Activated CD4-positive, alpha-beta T cell treated with anti-CD3 and anti-CD28 coated beads for 36 hours (primary cell): ENCODE measurements at regions of chr7 and their contacts with region 1.

Region 1: GRCh38 chr7:107563775-107564552 is at the starts of genes COG5 and DUS4L:
- DNase-seq: peak; percentile 92
- ATAC-seq: peak; percentile 88
- H3K4me3 Mint-ChIP-seq: peak within 1 kb of the TSS; percentile 85
- H3K27ac Mint-ChIP-seq: peak within 1 kb of the TSS; percentile 94
- H3K4me1 Mint-ChIP-seq: peaks cover 62% of the 10 kb centered on the region
- H3K27me3 Mint-ChIP-seq: no peaks in the 10 kb centered on the region
- total RNA-seq, gene COG5: 34.1 to 35.5 TPM
- total RNA-seq, gene DUS4L: 12.8 to 13.3 TPM

Region 2: DNA sequence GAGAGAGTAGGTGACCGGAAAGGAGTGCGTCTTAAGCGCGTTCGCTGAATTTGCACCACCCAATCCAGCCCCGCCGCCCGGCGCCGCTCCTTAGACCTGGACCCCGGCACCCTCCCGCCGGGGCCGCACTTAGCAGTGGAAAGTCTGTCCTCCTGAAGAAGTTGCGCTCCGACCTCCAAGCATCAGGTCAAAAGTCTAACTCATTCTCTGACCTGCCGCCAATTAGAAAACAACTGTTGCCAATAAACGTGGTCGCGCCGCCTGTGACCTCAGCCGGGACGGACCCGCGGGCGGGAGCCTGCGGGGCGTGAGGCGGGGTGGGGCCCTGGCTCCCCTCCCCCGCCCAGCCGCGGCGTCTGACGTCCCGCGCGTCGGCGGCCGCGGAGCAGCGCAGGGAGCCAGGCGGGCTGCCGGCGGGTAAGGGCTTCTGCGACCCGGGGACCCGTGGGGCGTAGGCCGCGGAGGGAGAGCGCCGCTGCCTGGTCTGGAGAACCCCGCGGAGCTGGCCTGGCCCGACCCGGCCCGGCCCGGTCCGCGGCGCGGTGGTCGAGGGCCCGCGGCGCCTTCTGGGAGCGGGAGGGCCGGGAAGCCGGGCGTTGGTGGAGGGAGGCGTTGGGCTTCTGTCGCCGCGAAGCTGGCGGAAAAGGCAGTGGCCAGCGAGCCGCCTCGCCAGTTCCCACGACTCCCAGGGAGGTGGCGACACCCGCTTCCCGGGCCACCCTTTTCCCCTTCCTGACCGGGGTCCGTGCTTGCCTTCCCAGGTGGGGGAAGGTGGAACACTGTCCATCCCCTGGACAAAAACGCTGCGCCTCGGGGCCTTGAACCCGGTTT is 16.1 kb after region 1 on chr7 and contains the start of gene BCAP29:
- CTCF ChIA-PET with region 1: interaction called, 8 read pairs
- POLR2A ChIA-PET with region 1: interaction called, 4 read pairs
- intact Hi-C with region 1: loop called (anchors 1 kb)
- DNase-seq: peak; percentile 83
- ATAC-seq: peak; percentile 96
- H3K4me3 Mint-ChIP-seq: peak within 1 kb of the TSS; percentile 84
- H3K27ac Mint-ChIP-seq: peak within 1 kb of the TSS; percentile 88
- H3K4me1 Mint-ChIP-seq: peaks cover 18% of the 10 kb centered on the region
- H3K27me3 Mint-ChIP-seq: no peaks in the 10 kb centered on the region
- total RNA-seq, gene BCAP29: 31.4 to 38.8 TPM

Region 3: DNA sequence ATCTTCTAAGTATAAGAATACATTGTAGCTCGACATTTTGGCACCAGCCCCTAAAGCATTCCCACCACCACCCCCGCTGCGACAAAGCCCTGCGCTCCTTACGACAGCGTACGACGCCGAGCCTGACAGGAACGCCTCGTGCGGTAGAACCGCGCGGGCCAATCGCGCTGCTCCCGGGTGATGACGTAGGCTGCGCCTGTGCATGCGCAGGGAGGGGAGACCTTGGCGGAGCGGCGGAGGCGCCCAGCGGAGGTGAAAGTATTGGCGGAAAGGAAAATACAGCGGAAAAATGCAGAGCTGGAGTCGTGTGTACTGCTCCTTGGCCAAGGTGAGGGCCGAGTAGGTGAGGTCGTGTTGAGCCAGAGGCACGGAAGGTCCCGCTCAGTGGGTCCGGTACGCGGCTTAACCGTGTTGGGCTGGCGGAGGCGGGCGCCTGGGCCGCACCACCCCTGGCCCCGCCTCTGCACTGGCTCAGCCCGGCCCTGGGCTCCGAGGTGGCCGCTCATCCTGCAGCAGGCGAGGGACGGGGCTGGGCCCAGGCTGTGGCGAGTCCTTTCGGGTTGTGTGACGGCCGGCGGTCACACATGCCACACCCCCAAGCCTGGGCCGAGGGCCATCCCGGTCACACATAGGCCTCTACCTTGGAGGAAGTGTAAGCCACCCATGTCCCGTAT is 327.1 kb after region 1 on chr7 and contains the start of gene DLD:
- CTCF ChIA-PET with region 1: no interaction called
- POLR2A ChIA-PET with region 1: no interaction called
- intact Hi-C with region 1: loop called (anchors 5 kb)
- DNase-seq: peak; percentile 97
- ATAC-seq: peak; percentile 98
- H3K4me3 Mint-ChIP-seq: peak within 1 kb of the TSS; percentile 79
- H3K27ac Mint-ChIP-seq: peak within 1 kb of the TSS; percentile 92
- H3K4me1 Mint-ChIP-seq: peaks cover 40% of the 10 kb centered on the region
- H3K27me3 Mint-ChIP-seq: no peaks in the 10 kb centered on the region
- total RNA-seq, gene DLD: 71.4 to 101 TPM

Region 4: DNA sequence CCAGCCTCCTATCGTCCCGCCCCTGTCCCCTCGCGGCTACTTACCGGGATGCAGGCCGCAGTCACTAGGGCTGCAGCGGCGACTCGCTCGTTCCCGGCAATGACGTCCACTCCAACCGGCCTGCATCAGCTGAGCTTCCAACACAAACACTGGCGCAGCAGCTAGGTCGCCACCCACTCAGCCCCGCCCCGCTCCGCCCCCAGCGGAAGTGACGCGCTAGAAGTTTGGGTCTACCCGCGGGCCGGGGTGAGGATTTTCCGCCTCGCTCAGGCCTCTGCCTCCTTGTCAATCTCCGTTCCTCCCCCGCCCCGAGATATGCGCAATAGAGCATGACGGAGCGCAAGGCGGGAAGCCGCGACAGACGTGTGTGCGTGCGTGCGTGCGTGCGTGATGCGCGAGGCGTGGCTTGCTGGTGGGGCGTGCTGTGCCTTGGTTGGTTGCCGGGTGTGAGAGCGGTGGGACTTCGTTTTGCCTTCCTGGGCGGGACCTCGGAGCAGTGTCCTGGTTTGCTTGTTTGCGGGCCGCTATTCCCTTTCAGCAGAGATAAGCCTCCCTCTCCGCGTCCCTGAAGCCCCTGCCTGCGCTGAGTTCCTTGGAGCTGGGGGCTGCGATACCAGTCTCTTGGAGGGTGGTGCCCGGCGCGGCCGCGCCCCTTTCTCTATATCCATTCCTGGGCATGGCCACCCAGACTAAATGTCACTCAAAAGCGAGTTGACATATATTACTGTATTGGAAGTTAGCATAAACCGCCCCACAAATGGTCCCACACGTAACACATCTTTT is 962.2 kb after region 1 on chr7 and contains the start of gene PNPLA8:
- CTCF ChIA-PET with region 1: no interaction called
- POLR2A ChIA-PET with region 1: no interaction called
- intact Hi-C with region 1: loop called in 1 of 2 experiments (anchors 5 kb)
- DNase-seq: peak; percentile 100
- ATAC-seq: peak; percentile 92
- H3K4me3 Mint-ChIP-seq: peak within 1 kb of the TSS; percentile 91
- H3K27ac Mint-ChIP-seq: peak within 1 kb of the TSS; percentile 96
- H3K4me1 Mint-ChIP-seq: peaks cover 37% of the 10 kb centered on the region
- H3K27me3 Mint-ChIP-seq: peaks cover 2% of the 10 kb centered on the region
- total RNA-seq, gene PNPLA8: 14.2 to 18.4 TPM

Region 5: DNA sequence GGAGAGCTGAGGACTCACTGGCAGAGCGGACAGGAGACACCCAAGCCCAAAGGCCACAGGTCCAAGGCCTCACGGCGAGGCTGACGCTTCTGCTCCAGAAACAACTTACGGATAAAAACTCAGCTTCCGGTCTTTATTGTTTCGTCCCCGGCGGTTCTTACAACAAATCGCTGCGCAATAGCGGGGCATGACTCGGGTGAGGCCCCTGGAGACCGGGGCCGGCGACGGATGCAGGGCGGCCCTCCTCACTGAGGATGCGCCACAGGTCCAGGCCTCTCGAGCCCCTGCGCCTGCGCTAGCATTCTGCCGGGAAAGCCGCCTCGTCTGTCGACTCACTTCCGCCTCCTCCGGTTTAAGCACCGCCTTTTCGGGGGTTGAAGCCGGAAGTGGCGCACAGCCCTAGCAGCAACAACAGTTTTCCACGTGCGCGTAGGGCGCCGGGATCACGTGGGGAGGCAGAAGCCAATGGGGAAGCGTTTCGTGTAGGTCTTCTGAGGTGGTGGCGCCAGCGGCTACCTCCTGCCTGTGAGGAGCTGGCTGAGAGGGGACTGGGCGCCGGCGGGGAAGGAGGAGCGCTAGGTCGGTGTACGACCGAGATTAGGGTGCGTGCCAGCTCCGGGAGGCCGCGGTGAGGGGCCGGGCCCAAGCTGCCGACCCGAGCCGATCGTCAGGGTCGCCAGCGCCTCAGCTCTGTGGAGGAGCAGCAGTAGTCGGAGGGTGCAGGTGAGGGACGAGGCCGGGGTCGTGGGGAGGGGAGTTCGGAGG is 1005.6 kb after region 1 on chr7 and contains the starts of genes DNAJB9 and THAP5:
- CTCF ChIA-PET with region 1: no interaction called
- POLR2A ChIA-PET with region 1: no interaction called
- intact Hi-C with region 1: loop called in 1 of 2 experiments (anchors 10 kb)
- DNase-seq: peak; percentile 99
- ATAC-seq: peak; percentile 91
- H3K4me3 Mint-ChIP-seq: peak within 1 kb of the TSS; percentile 98
- H3K27ac Mint-ChIP-seq: peak within 1 kb of the TSS; percentile 99
- H3K4me1 Mint-ChIP-seq: peaks cover 40% of the 10 kb centered on the region
- H3K27me3 Mint-ChIP-seq: no peaks in the 10 kb centered on the region
- total RNA-seq, gene DNAJB9: 8.3 to 8.4 TPM
- total RNA-seq, gene THAP5: 30.1 to 43.4 TPM

Region 6: GRCh38 chr7:108848486-108848885 is 1284.5 kb after region 1 on chr7:
- CTCF ChIA-PET with region 1: no interaction called
- POLR2A ChIA-PET with region 1: no interaction called
- intact Hi-C with region 1: no loop called
- DNase-seq: no peak
- ATAC-seq: no peak
- H3K4me3 Mint-ChIP-seq: no peak overlapping the region
- H3K27ac Mint-ChIP-seq: no peak overlapping the region
- H3K4me1 Mint-ChIP-seq: no peaks in the 10 kb centered on the region
- H3K27me3 Mint-ChIP-seq: no peaks in the 10 kb centered on the region